Common myeloid progenitor, CD34-positive (primary cell): ENCODE measurements at regions of chr10 and their contacts with region 1.

Region 1: DNA sequence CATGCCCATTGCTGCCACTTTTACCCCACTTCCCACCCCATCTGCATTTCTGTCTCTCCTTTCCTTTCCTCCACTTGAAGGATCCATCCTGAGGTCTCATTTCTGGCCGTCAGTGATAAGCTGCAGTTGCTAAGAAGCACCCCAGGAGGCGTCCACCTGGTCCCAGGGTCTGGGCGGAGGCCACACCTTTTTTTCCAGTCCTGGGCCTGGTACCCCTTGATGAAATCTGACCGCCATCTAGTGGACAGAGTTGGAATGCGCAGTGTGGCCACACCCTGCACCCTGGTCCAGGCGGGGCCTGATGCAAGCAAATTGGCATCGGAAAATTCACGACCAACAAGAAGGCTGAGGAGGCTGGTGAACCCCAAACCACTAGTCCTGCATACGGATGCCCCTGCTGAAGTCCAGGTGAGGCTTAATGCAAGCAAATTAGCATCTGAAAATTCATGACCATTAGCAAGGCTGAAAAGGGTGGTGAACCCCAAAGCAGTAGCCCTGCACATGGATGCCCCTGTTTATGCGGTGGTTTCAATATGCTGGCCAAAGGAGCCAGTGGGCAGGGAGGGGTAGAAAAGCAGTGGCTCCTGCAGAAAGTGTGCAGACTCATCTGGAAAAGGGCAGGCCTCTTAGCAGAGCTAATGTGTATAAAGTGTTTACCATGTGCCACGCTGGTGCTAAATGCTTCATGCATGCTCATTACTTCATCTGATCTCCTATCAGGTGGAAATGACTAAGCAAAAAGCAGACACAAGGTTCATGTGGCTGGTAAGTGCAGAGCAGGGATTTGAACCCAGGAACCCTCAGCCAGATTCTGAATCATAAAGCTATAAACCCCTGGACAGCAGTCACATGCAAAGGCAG is 43.2 kb downstream of the GPAM start:
- DNase-seq: peak; percentile 87 to 90 (median 89)
- H3K4me3 ChIP-seq: no peak overlapping the region
- H3K27ac ChIP-seq: no peak overlapping the region
- H3K4me1 ChIP-seq: no peaks in the 10 kb centered on the region
- H3K27me3 ChIP-seq: no peaks in the 10 kb centered on the region

Region 2: GRCh38 chr10:112115799-112116385 is 24.4 kb before region 1 on chr10:
- CTCF ChIA-PET with region 1: interaction called, 24 read pairs
- POLR2A ChIA-PET with region 1: no interaction called
- DNase-seq: peak; percentile 15 to 52 (median 40)
- H3K4me3 ChIP-seq: no peak overlapping the region
- H3K27ac ChIP-seq: no peak overlapping the region
- H3K4me1 ChIP-seq: no peaks in the 10 kb centered on the region
- H3K27me3 ChIP-seq: peaks cover 0 to 3% (median 0%) of the 10 kb centered on the region in 5 experiments

Region 3: DNA sequence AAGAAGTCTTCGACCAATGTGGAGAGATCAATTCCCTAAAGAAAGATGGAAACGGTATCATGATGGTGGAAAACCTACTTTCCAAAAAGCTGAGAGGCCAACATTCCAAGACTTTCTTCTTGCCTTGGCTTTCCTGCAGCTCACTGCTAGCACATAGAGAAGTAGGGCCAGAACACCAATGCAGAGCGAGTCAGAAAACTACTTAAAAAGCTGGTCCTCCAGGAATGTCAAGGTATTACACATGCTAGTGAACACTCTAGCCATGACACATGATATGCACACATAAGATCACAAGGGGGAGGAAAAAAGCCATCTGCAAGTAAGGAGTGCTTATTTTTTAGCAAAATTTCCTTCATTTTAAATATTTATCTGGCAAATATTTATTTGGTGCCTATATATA is 20.5 kb after region 1 on chr10:
- CTCF ChIA-PET with region 1: interaction called, 11 read pairs
- POLR2A ChIA-PET with region 1: no interaction called
- DNase-seq: no peak
- H3K4me3 ChIP-seq: no peak overlapping the region
- H3K27ac ChIP-seq: no peak overlapping the region
- H3K4me1 ChIP-seq: no peaks in the 10 kb centered on the region
- H3K27me3 ChIP-seq: no peaks in the 10 kb centered on the region